CD4-positive, alpha-beta T cell (primary cell): ENCODE measurements at regions of chr4 and their contacts with region 1.

Region 1: GRCh38 chr4:48093949-48094550 is 40.0 kb downstream of the TXK start:
- DNase-seq: no peak
- ATAC-seq: no peak
- H3K4me3 ChIP-seq: no peak overlapping the region
- H3K4me3 Mint-ChIP-seq: no peak overlapping the region
- H3K27ac ChIP-seq: peak overlapping the region in 1 of 2 donors; percentile 17
- H3K27ac Mint-ChIP-seq: peak overlapping the region; percentile 60
- H3K4me1 ChIP-seq: no peaks in the 10 kb centered on the region
- H3K4me1 Mint-ChIP-seq: peaks cover 9% of the 10 kb centered on the region
- H3K27me3 ChIP-seq: no peaks in the 10 kb centered on the region
- H3K27me3 Mint-ChIP-seq: no peaks in the 10 kb centered on the region
- CTCF ChIP-seq: no peak

Region 2: DNA sequence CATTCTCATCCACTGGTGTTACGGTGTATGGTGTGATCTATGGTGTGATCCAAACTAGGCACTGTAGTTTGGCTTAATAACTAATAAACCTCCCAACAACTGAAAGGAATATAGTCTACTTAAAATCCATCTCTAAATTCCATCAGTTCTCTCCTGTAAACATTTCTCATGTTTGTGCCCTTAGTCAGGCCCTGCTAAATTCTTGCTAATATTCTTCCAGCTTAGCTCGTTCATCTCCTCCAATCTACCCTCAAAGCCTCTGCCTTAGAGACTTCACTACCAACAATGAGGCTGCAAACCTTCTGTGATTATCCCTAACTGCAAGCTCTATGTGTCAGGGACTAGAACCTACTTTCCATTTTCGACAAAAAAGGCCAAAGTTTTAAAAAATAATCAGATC is 424.1 kb after region 1 on chr4:
- CTCF ChIA-PET with region 1: no interaction called
- POLR2A ChIA-PET with region 1: no interaction called
- intact Hi-C with region 1: loop called in 1 of 2 experiments (anchors 10 kb)
- DNase-seq: no peak
- ATAC-seq: no peak
- H3K4me3 ChIP-seq: no peak overlapping the region
- H3K4me3 Mint-ChIP-seq: no peak overlapping the region
- H3K27ac ChIP-seq: no peak overlapping the region
- H3K27ac Mint-ChIP-seq: no peak overlapping the region
- H3K4me1 ChIP-seq: no peaks in the 10 kb centered on the region
- H3K4me1 Mint-ChIP-seq: no peaks in the 10 kb centered on the region
- H3K27me3 ChIP-seq: no peaks in the 10 kb centered on the region
- H3K27me3 Mint-ChIP-seq: no peaks in the 10 kb centered on the region
- CTCF ChIP-seq: no peak